Prostate gland (tissue), 2 donors: ENCODE measurements at regions of chr3 and their contacts with region 1.

Region 1: DNA sequence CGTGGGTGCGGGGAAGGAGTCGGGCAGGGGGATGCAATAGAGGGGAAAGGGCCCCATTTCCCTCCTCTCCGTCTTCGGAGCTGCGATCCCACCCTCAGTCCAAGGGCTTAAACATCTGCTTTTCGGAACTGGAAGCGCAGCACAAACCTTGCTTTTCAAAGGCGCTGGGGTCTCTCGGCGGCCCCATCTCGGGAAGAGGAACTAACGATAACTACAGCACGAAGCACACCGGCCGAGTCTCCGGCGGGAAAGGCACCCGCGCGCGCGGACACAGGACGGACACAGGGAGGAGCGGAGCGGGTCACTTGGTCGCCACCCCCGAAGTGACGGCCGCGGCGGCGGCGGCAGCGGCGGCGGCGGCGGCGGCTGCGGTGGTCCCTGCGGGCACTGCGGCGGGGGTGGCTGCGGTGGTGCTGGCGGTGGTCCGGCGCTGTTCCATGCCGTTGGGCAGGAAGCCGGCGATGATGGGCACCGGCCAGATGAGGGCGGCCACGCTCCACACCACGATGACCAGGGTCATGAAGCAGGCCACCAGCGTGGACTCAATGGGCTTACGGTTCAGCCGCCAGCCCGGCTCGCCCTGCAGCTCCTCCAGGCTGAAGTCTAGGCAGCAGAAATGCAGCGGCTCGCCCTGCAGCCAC is 1.1 kb downstream of the TMEM158 start:
- DNase-seq: peak; percentile 72
- H3K4me3 ChIP-seq: peak overlapping the region; percentile 41 to 54
- H3K27ac ChIP-seq: peak overlapping the region in 1 of 2 donors; percentile 41
- H3K4me1 ChIP-seq: no peaks in the 10 kb centered on the region
- H3K27me3 ChIP-seq: no peaks in the 10 kb centered on the region
- CTCF ChIP-seq: peak; percentile 26 to 75 (median 55)
- POLR2A ChIP-seq: no peak

Region 2: GRCh38 chr3:44252332-44252959 is 972.5 kb before region 1 on chr3:
- intact Hi-C with region 1: no loop called
- DNase-seq: no peak
- H3K4me3 ChIP-seq: no peak overlapping the region
- H3K27ac ChIP-seq: no peak overlapping the region
- H3K4me1 ChIP-seq: no peaks in the 10 kb centered on the region
- H3K27me3 ChIP-seq: no peaks in the 10 kb centered on the region
- CTCF ChIP-seq: no peak
- POLR2A ChIP-seq: no peak

Region 3: DNA sequence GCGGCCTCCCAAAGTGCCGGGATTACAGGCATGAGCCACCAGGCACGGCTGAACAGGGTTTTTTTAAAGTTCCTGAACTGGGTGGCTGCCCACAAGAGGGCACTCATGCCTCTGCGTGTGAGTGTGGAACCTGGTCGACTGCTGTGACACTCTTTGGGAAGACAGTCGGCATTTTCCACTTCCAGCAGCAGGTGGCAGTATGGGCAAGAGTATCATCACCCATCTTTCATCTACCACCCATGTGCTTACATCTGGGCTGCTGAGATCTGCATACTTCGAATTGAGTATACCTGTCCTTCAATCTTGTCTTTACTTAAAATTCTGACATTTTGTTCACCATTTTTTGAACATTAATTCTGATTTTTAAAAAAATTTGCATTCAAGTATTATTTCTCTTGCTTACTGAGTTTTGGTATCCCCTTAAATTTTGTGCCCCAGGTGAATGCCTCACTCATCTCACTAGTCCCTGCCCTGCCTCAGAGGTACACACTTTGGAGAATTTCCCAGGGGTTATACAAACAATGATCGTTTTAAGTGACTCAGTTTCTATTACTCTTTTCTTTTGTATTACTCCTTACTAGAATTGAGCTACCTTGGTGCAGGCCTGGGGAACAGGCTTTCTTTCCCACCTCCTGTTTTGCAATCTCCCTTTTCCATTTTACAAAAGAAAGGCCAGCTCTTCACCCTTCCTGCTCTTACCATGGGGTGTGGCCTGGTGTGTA is 187.0 kb before region 1 on chr3:
- intact Hi-C with region 1: loop called (anchors 5 kb)
- DNase-seq: peak; percentile 94
- H3K4me3 ChIP-seq: no peak overlapping the region
- H3K27ac ChIP-seq: no peak overlapping the region
- H3K4me1 ChIP-seq: no peaks in the 10 kb centered on the region
- H3K27me3 ChIP-seq: no peaks in the 10 kb centered on the region
- CTCF ChIP-seq: peak; percentile 82 to 99 (median 96)
- POLR2A ChIP-seq: no peak

Region 4: GRCh38 chr3:45163481-45163880 is 61.5 kb before region 1 on chr3:
- intact Hi-C with region 1: no loop called
- DNase-seq: no peak
- H3K4me3 ChIP-seq: no peak overlapping the region
- H3K27ac ChIP-seq: no peak overlapping the region
- H3K4me1 ChIP-seq: no peaks in the 10 kb centered on the region
- H3K27me3 ChIP-seq: no peaks in the 10 kb centered on the region
- CTCF ChIP-seq: no peak
- POLR2A ChIP-seq: no peak

Region 5: GRCh38 chr3:45333549-45333948 is 108.6 kb after region 1 on chr3:
- intact Hi-C with region 1: no loop called
- DNase-seq: no peak
- H3K4me3 ChIP-seq: no peak overlapping the region
- H3K27ac ChIP-seq: no peak overlapping the region
- H3K4me1 ChIP-seq: no peaks in the 10 kb centered on the region
- H3K27me3 ChIP-seq: no peaks in the 10 kb centered on the region
- CTCF ChIP-seq: no peak
- POLR2A ChIP-seq: no peak

Region 6: GRCh38 chr3:45426161-45426560 is 201.2 kb after region 1 on chr3:
- intact Hi-C with region 1: no loop called
- DNase-seq: no peak
- H3K4me3 ChIP-seq: no peak overlapping the region
- H3K27ac ChIP-seq: no peak overlapping the region
- H3K4me1 ChIP-seq: no peaks in the 10 kb centered on the region
- H3K27me3 ChIP-seq: no peaks in the 10 kb centered on the region
- CTCF ChIP-seq: no peak
- POLR2A ChIP-seq: no peak

Region 7: GRCh38 chr3:45499529-45499928 is 274.6 kb after region 1 on chr3:
- intact Hi-C with region 1: loop called (anchors 2 kb)
- DNase-seq: no peak
- H3K4me3 ChIP-seq: no peak overlapping the region
- H3K27ac ChIP-seq: no peak overlapping the region
- H3K4me1 ChIP-seq: no peaks in the 10 kb centered on the region
- H3K27me3 ChIP-seq: no peaks in the 10 kb centered on the region
- CTCF ChIP-seq: peak; percentile 33 to 70 (median 54)
- POLR2A ChIP-seq: no peak

Region 8: GRCh38 chr3:45593708-45594609 is 369.0 kb after region 1 on chr3:
- intact Hi-C with region 1: loop called (anchors 10 kb)
- DNase-seq: peak; percentile 69
- H3K4me3 ChIP-seq: peak overlapping the region; percentile 61 to 73
- H3K27ac ChIP-seq: peak overlapping the region; percentile 83 to 88
- H3K4me1 ChIP-seq: peaks cover 23% of the 10 kb centered on the region
- H3K27me3 ChIP-seq: no peaks in the 10 kb centered on the region
- CTCF ChIP-seq: no peak
- POLR2A ChIP-seq: peak; percentile 66